ENCODE measurements at regions of chr14 and their contacts with region 1.

Region 1: GRCh38 chr14:67158566-67158965 is 30.7 kb upstream of the GARIN2 start:
- DNase-seq: no peak
- H3K4me3 ChIP-seq: no peak overlapping the region
- H3K27ac ChIP-seq: no peak overlapping the region
- H3K4me1 ChIP-seq: no peaks in the 10 kb centered on the region
- H3K27me3 ChIP-seq: no peaks in the 10 kb centered on the region
- CTCF ChIP-seq: no peak

Region 2: GRCh38 chr14:66910311-66910840 is 248.2 kb before region 1 on chr14:
- CTCF ChIA-PET with region 1: no interaction called
- POLR2A ChIA-PET with region 1: no interaction called
- intact Hi-C with region 1: no loop called
- DNase-seq: no peak
- H3K4me3 ChIP-seq: no peak overlapping the region
- H3K27ac ChIP-seq: no peak overlapping the region
- H3K4me1 ChIP-seq: no peaks in the 10 kb centered on the region
- H3K27me3 ChIP-seq: no peaks in the 10 kb centered on the region
- CTCF ChIP-seq: no peak

Region 3: GRCh38 chr14:67018720-67019119 is 139.8 kb before region 1 on chr14:
- CTCF ChIA-PET with region 1: no interaction called
- POLR2A ChIA-PET with region 1: interaction called, 10 read pairs
- intact Hi-C with region 1: no loop called
- DNase-seq: no peak
- H3K4me3 ChIP-seq: no peak overlapping the region
- H3K27ac ChIP-seq: no peak overlapping the region
- H3K4me1 ChIP-seq: no peaks in the 10 kb centered on the region
- H3K27me3 ChIP-seq: no peaks in the 10 kb centered on the region
- CTCF ChIP-seq: no peak

Region 4: DNA sequence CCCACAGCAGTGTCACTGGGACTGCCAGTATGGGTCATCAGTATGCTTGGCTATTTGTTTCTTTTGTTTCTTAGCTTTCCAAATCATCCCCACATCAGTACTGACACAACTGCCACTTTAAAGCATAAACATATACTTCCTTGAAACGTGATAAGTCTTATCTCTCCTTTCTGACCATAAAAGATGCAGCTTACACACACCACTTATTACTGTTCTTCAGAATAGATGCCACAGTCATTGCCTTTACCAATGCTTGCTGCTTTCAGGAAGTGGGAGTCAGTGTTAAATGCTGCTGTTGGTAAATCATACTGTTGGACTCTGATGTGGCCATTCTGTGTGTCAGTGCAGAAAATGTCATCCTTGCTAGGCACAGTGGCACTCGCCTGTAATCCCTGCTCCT is 12.1 kb after region 1 on chr14:
- CTCF ChIA-PET with region 1: no interaction called
- POLR2A ChIA-PET with region 1: no interaction called
- intact Hi-C with region 1: no loop called
- DNase-seq: peak in 1 of 2 experiments; percentile 44
- H3K4me3 ChIP-seq: no peak overlapping the region
- H3K27ac ChIP-seq: no peak overlapping the region
- H3K4me1 ChIP-seq: peaks cover 13% of the 10 kb centered on the region
- H3K27me3 ChIP-seq: no peaks in the 10 kb centered on the region
- CTCF ChIP-seq: no peak

Region 5: DNA sequence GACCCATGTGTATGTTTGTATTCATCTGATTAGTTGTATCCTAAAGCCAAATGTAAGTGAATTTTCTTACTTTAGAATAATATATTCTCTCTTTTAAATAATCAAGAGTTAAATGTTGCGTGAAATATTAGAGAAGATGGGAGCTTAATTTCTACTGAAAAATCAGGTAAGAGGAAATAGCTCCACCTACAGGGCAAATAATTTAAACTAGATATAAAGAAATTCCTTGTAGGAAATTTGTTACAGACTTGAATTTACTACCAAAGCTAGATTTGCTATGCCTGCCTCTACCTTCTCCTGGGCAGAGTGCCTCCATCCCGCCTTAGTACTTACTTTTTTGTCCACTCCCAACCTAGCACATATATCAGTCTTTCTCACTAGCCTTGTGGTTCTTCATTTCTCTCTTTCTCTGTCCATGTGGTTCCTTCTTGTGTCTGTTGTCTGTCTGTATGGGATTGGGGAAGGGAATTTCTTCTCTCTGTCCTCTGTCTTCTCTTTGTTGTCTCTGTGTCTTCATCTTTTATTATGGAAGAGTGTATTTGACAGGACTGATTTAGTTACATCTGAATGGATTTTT is 127.4 kb after region 1 on chr14:
- CTCF ChIA-PET with region 1: no interaction called
- POLR2A ChIA-PET with region 1: no interaction called
- intact Hi-C with region 1: no loop called
- DNase-seq: peak in 1 of 2 experiments; percentile 56
- H3K4me3 ChIP-seq: no peak overlapping the region
- H3K27ac ChIP-seq: no peak overlapping the region
- H3K4me1 ChIP-seq: no peaks in the 10 kb centered on the region
- H3K27me3 ChIP-seq: no peaks in the 10 kb centered on the region
- CTCF ChIP-seq: peak; percentile 89

Region 6: GRCh38 chr14:67373347-67373746 is 214.8 kb after region 1 on chr14:
- CTCF ChIA-PET with region 1: interaction called, 10 read pairs
- POLR2A ChIA-PET with region 1: no interaction called
- intact Hi-C with region 1: no loop called
- DNase-seq: no peak
- H3K4me3 ChIP-seq: no peak overlapping the region
- H3K27ac ChIP-seq: no peak overlapping the region
- H3K4me1 ChIP-seq: no peaks in the 10 kb centered on the region
- H3K27me3 ChIP-seq: no peaks in the 10 kb centered on the region
- CTCF ChIP-seq: no peak

Measured in PC-9 (cell line).